AG04450 (cell line): ENCODE measurements at regions of chr12 and their contacts with region 1.

Region 1: GRCh38 chr12:49515266-49515665 is 23.6 kb upstream of the KCNH3 start:
- DNase-seq: peak; percentile 65
- H3K4me3 ChIP-seq: no peak overlapping the region
- H3K27ac ChIP-seq: no peak overlapping the region
- H3K27me3 ChIP-seq: no peaks in the 10 kb centered on the region
- CTCF ChIP-seq: no peak

Region 2: GRCh38 chr12:49331380-49332222 is 183.7 kb before region 1 on chr12:
- CTCF ChIA-PET with region 1: interaction called, 85 read pairs
- POLR2A ChIA-PET with region 1: no interaction called
- DNase-seq: peak; percentile 44
- H3K4me3 ChIP-seq: no peak overlapping the region
- H3K27ac ChIP-seq: no peak overlapping the region
- H3K27me3 ChIP-seq: peaks cover 32% of the 10 kb centered on the region
- CTCF ChIP-seq: peak; percentile 92

Region 3: GRCh38 chr12:49347384-49348237 is 167.7 kb before region 1 on chr12:
- CTCF ChIA-PET with region 1: interaction called, 47 read pairs
- POLR2A ChIA-PET with region 1: no interaction called
- DNase-seq: peak; percentile 77
- H3K4me3 ChIP-seq: peak overlapping the region; percentile 66
- H3K27ac ChIP-seq: peak overlapping the region; percentile 39
- H3K27me3 ChIP-seq: peaks cover 44% of the 10 kb centered on the region
- CTCF ChIP-seq: peak; percentile 87

Region 4: DNA sequence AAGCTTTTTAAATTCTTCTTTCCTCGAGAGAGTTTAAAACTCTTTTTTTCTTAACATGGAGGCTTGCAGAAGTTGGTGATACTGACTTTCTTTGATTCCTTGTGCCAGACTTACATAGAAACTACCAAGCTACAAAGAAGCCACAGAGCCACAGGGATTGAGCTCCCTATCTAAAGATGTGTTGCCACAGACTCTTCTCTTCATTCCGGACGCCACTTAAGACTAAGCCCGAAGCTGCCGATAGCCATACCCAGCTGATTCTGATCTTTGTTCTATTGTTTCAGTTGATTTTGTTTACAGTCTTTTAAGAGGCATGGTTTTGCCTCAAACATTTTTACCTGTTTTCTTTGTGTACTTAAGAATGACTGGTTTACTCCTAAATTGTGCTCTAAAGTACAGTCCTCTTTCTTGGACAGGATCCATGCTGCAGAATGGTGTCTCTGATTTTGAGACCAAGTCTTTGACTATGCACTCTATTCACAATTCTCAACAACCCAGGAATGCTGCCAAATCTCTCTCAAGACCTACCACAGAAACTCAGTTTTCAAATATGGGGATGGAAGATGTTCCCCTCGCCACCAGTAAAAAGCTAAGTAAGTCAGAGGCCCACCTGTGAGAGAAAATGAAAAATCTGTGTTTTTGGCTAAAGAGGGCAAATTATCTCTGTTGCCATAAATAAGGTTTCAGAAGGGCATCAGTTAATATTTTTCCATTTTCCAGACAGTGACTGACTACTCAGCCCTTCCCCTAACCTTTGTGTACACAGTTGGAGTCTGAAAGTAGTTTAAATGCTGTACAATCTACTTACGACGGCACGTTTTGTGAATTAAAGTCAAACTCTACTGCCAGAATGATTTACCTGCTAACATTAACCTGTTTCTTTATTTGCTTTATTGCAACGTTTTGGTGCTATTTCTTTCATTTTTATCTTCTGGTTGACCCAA is 18.6 kb before region 1 on chr12:
- CTCF ChIA-PET with region 1: interaction called, 11 read pairs
- POLR2A ChIA-PET with region 1: no interaction called
- DNase-seq: no peak
- H3K4me3 ChIP-seq: no peak overlapping the region
- H3K27ac ChIP-seq: no peak overlapping the region
- H3K27me3 ChIP-seq: no peaks in the 10 kb centered on the region
- CTCF ChIP-seq: no peak

Region 5: DNA sequence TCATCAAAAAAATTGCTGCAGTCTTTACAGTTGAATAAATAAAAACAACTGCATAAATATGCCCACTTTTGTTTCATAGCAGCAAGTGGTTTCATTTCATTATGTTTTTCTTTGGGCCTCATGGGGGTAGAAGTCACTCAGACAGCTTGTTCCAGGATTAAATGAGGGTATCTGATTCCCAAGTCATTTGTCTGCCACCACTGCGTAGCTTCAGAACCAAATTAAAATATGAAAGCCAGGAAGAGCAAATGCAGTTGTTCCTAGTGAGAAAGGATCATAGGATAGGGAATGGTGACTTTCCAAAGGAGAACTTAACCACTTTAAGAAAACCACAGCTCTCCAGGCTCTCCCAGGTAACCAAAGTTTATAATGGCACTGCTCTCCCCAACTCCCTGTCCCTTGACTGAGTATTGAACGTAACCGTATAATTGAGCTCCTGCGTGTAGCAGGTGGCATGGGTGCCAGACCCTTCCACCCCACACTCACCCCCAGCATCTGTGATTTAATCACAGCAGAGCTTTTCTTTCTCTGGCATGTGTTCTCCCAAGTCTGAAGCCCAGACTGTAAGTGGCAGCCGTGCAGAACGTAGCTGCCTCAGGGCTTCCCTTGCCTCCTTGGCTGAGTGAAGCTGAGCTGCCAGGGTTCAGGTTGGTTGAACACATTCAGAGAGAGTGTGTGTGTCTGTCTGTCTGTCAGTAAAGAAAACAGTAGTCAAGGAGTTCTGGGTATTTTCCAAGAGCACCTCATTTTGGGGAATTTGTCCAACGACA is 12.3 kb after region 1 on chr12:
- CTCF ChIA-PET with region 1: interaction called, 18 read pairs
- POLR2A ChIA-PET with region 1: no interaction called
- DNase-seq: no peak
- H3K4me3 ChIP-seq: no peak overlapping the region
- H3K27ac ChIP-seq: no peak overlapping the region
- H3K27me3 ChIP-seq: no peaks in the 10 kb centered on the region
- CTCF ChIP-seq: no peak

Region 6: DNA sequence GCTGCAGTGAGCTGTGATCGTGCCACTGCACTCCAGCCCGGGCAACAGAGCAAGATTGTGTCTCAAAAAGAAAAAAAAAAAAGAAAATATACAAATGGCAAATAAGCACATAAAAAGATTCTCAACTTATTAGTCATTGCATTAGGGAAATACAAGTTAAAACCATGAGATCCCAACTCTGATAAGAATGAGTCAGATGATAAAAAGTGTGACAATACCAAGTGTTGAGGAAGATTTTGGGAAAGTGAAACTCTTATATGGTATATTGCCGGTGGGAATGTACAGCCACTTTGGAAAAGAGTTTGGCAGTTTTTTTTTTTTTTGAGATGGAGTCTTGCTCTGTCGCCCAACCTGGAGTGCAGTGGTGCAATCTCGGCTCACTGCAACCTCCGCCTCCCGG is 100.5 kb after region 1 on chr12:
- CTCF ChIA-PET with region 1: no interaction called
- POLR2A ChIA-PET with region 1: no interaction called
- DNase-seq: no peak
- H3K4me3 ChIP-seq: no peak overlapping the region
- H3K27ac ChIP-seq: no peak overlapping the region
- H3K27me3 ChIP-seq: peaks cover 3% of the 10 kb centered on the region
- CTCF ChIP-seq: no peak